Heart right ventricle (tissue), 16 donors: ENCODE measurements at regions of chr2 and their contacts with region 1.

Region 1: DNA sequence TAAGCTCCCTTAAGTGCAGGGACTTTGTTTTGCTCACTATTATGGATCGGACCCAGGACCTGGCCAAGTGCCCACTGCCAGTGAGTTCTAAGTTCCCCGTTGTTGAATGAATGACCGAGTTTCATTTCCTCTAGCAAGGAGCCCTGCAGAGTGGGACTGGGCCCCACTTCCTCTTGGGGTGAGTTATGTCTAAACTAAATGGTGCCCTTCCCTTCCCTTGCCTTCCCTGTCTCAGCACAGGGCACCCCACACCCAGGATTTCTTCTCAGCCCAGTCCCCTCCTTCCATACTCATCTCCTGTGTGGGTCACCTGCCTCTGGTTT is 195.3 kb upstream of the HS6ST1 start:
- DNase-seq: no peak
- ATAC-seq: peak in 7 of 8 donors; percentile 12 to 69 (median 55)
- H3K4me3 ChIP-seq: no peak overlapping the region
- H3K27ac ChIP-seq: peak overlapping the region in 1 of 10 donors; percentile 58
- H3K4me1 ChIP-seq: peaks cover 0 to 26% (median 0%) of the 10 kb centered on the region in 9 donors
- H3K27me3 ChIP-seq: no peaks in the 10 kb centered on the region
- CTCF ChIP-seq: no peak

Region 2: DNA sequence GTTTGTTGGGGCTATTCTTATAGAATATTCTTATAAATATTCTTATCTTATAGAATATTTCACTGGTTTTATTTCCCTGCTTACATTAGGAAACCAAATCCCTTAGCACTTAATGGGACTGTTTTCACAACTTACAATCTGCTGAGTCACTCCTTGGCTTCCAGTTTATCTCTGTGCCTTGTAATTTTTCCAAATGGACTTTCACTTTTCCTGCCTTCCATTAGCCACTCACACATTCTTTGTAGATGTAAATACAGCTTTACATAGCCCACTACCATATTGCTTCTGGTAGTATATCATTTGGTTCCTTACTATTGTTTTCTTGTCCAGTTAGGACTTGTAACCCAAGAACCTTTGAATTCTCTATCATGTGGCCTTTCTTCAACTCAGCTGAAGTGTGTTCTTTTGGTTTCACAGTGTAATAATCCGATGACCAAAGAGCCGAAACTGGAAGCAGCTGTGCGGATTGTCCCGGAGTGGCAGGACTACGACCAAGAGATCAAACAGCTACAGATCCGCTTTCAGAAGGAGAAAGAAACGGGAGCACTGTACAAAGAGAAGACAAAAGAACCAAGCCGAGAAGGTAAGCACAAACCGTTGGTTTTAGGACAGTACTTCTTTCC is 326.8 kb before region 1 on chr2:
- intact Hi-C with region 1: loop called in 1 of 10 experiments (anchors 10 kb)
- DNase-seq: no peak
- ATAC-seq: peak in 6 of 8 donors; percentile 48 to 75 (median 60)
- H3K4me3 ChIP-seq: peak overlapping the region in 5 of 10 donors; percentile 2 to 18 (median 13)
- H3K27ac ChIP-seq: peak overlapping the region in 9 of 10 donors; percentile 25 to 77 (median 37)
- H3K4me1 ChIP-seq: peaks cover 0 to 18% (median 5%) of the 10 kb centered on the region in 9 donors
- H3K27me3 ChIP-seq: no peaks in the 10 kb centered on the region
- CTCF ChIP-seq: no peak